ENCODE measurements at regions of chr14 and their contacts with region 1.

Region 1: GRCh38 chr14:22282417-22282816 is 306.6 kb downstream of the DAD1 start:
- DNase-seq: no peak
- H3K4me3 Mint-ChIP-seq: no peak overlapping the region
- H3K27ac Mint-ChIP-seq: no peak overlapping the region
- H3K4me1 Mint-ChIP-seq: peaks cover 2% of the 10 kb centered on the region
- H3K27me3 Mint-ChIP-seq: no peaks in the 10 kb centered on the region

Region 2: GRCh38 chr14:22221508-22221907 is 60.9 kb before region 1 on chr14:
- CTCF ChIA-PET with region 1: interaction called, 4 read pairs
- intact Hi-C with region 1: loop called (anchors 5 kb)
- DNase-seq: no peak
- H3K4me3 Mint-ChIP-seq: peak overlapping the region; percentile 69
- H3K27ac Mint-ChIP-seq: peak overlapping the region; percentile 72
- H3K4me1 Mint-ChIP-seq: peaks cover 7% of the 10 kb centered on the region
- H3K27me3 Mint-ChIP-seq: no peaks in the 10 kb centered on the region